HEK293T (cell line): ENCODE measurements at regions of chr12 and their contacts with region 1.

Region 1: GRCh38 chr12:107131832-107132616 is 38.7 kb upstream of the CRY1 start:
- DNase-seq: peak; percentile 67

Region 2: DNA sequence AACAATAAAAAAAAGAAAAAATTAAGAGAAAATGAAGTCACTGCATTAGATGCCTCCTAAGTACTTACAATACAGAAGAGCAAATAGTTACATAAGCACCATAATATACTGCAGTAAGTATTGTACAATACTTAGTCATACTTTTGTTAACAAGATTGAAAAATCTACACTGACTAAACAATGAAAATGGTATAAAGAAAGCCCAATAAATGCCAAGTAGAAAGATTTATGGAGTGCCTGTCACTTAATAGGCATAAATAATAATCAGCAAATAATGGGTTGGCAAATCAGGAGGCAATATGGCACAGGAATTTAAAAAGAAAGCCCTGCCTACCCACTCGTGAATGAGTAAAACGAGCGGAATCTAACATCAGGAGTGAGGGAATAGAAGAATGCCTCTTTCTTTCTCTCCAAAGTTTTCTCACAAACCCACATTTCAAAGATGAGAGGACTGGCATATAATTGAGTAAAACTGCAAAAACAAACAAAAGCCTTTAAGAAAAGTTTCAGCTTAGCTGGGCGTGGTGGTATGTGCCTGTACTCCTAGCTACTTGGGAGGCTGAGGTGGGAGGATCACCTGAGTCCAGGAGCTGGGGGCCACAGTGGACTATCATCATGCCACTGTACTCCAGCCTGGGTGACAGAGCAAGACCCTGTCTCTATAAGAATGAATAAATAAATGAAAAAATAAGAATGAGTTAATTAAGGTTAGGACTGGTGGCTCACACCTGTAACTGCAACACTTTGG is 74.8 kb before region 1 on chr12:
- CTCF ChIA-PET with region 1: no interaction called
- POLR2A ChIA-PET with region 1: no interaction called
- DNase-seq: no peak

Region 3: DNA sequence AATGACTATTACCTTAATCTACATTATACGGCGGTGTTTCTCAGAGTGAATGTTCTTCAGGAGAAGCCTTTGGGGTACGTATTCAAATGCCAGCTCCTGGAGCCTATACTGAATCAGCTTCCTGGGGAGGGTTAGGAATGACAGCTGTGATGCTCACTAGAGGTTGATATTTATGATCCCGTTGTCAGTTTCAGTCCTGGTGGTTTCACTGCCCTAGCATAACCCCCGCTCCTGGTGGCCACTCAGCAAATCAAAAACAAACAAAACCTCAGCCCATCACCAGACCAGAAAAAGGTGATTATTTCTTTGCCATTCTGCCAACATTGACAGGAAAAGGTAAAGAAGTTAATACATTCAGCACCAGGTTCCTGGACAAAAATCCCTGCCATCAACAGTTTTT is 97.8 kb after region 1 on chr12:
- CTCF ChIA-PET with region 1: no interaction called
- POLR2A ChIA-PET with region 1: no interaction called
- DNase-seq: no peak

Region 4: DNA sequence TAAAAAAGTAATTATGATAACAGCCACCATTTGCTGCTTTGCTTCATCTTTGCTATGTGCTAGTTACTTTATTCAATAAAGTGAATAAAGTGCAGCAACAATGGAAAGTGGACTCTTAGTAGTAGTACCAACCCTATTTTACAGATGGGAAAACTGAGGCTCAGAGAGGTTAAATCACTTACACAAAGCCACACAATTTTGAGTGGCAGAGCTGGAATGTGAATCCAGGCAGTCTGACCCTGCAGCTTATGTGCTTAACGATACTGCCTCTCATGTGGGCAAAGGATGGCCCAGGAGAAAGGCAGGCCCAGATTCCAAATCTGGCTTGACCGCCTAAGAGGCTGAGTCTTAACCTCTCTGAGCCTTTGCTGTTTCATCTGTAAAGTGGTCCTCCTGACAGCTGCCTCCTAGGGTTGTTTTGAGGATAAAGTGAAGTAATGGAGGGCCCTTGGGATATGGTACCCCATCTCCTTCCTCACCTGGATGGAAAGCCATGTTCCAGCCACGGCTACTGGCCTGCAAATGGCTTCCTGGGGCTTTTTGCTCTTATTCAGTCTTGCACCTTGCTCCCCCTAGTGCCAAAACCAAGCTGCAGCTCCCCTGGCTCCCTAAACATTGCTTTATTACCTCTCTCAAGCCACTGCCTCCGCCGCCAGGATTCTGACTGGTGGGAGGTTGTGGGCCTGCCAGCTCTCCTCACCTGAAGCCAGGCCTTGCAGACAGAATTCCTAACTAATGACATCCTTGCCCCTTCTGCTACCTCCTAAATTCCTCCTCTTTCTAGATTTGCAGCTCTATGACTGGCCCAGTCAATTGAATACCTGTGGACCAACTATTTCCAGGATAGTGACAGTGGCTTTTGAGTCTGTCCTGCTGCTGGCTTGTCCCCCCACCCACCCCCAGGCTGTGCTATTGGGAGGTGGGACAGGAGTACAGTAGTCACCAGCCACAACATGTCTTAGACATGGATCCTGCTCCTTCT is 270.3 kb after region 1 on chr12:
- CTCF ChIA-PET with region 1: interaction called, 26 read pairs
- POLR2A ChIA-PET with region 1: no interaction called
- DNase-seq: peak; percentile 62

Region 5: DNA sequence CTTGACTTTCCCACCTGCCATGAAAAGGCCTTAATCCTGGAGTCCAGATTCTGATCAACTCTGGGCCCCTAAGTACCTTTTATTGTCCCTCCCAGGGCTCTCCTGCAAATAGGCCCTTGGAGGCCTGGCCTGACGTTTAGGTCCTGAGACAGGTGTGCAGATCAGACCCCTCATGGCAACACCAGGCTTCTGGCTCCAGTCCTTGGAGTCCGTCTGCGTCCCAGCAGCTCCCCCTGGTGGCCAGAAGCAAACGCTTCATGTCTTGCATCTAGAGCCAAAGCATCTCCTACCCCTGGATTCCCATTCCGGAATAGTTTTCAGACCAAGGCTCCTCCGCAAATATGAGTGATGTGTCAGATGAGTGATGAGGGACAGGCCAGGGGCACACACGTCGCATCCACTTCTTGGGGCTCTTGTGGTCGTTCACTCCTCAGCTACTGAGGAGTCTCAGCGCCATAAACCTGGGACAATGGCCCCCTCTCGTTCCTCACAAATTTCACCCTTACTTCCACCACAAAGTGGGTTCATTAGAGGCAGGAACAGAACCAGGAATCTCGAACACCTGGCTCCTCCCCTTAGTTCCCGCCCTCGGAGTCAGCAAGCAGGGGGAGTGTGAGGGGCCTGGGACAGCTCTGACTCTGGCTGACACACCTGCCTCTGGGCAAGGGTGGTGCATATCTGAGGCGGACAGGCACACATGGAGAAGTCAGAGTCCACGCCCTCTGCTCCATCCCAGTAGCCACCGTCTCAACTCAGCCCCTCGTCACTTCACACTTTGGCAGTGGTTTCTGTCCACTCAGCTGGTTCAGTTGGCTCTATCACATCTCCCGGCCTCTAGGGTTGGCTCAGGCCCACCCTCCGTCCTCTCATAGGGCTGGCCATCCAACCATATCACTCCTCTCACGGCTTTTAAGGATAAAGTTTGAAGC is 475.7 kb after region 1 on chr12:
- CTCF ChIA-PET with region 1: interaction called, 35 read pairs
- POLR2A ChIA-PET with region 1: no interaction called
- DNase-seq: peak; percentile 86